HEK293 (cell line): ENCODE measurements at regions of chr22 and their contacts with region 1.

Region 1: GRCh38 chr22:25898689-25899365 is 156.8 kb downstream of the MYO18B start:
- H3K4me3 ChIP-seq: no peak overlapping the region
- H3K27ac ChIP-seq: no peak overlapping the region
- H3K4me1 ChIP-seq: no peaks in the 10 kb centered on the region
- CTCF ChIP-seq: no peak

Region 2: DNA sequence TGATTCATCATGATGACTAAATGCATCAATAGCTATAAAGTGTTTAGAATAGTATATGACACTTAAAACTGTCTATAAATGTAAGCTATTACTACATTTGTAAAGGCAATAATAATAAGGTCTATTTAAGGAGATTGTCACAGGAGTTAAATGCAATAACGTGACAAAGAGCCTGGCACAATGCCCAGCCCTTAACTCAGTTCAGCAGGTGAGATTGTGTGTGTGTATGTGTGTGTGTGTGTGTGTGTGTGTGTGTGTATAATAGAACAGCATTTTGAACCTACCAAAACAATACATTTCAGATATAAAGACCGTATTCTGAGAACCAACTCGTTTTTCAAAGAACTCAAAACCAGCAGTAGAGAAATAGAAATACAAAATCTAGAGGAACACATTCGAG is 20.6 kb after region 1 on chr22:
- CTCF ChIA-PET with region 1: interaction called, 19 read pairs
- POLR2A ChIA-PET with region 1: no interaction called
- H3K4me3 ChIP-seq: no peak overlapping the region
- H3K27ac ChIP-seq: no peak overlapping the region
- H3K4me1 ChIP-seq: peaks cover 9% of the 10 kb centered on the region
- CTCF ChIP-seq: no peak

Region 3: GRCh38 chr22:25940479-25940878 is 41.7 kb after region 1 on chr22:
- CTCF ChIA-PET with region 1: interaction called, 12 read pairs
- POLR2A ChIA-PET with region 1: no interaction called
- H3K4me3 ChIP-seq: no peak overlapping the region
- H3K27ac ChIP-seq: no peak overlapping the region
- H3K4me1 ChIP-seq: peaks cover 6% of the 10 kb centered on the region
- CTCF ChIP-seq: peak; percentile 35

Region 4: DNA sequence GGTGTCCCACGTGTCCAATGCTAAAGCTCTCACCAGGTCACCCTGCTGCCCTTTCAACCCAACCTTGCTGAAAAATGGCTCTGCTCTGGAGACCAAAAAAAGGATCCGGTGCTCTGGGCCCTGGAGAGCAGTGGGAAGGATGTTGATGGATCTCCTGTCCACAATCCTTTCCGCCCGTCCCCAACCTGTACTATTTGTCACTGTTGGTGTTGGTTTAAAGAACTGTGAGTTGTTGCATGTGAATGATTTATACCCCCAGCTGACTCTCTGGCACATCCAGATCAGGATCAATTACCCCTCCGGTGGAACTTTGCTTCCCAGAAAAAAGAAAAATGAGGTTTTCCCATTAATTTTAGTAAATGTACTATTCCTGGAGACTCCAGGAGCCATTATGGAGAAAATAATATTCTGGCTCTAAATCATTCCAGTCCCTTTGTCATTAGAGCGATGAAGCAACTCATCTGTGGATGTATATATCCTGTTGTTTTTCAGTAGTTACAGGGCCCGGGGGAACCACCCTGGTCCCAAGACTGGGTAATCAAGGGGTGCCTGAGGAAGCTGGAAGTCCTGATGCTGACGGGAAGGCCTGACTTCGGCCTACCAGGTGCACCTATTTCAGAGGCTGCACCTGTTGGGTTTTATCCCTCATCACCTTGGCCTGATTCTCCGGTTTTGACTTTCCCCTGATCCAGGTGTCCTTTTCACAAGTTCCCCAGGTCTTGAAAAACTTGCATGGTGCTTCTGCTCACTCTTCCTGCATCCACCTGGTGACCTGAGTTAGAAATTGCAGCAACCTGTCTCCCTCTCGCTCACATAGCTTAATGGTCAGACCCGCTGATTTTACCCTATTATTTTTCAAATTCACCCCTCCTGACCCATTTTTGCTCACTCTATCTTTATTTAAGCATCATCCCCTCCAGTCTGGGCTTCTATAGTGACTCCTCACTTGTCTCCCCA is 61.3 kb after region 1 on chr22:
- CTCF ChIA-PET with region 1: interaction called, 12 read pairs
- POLR2A ChIA-PET with region 1: no interaction called
- H3K4me3 ChIP-seq: no peak overlapping the region
- H3K27ac ChIP-seq: no peak overlapping the region
- H3K4me1 ChIP-seq: no peaks in the 10 kb centered on the region
- CTCF ChIP-seq: no peak